ENCODE measurements at regions of chr13 and their contacts with region 1.

Region 1: DNA sequence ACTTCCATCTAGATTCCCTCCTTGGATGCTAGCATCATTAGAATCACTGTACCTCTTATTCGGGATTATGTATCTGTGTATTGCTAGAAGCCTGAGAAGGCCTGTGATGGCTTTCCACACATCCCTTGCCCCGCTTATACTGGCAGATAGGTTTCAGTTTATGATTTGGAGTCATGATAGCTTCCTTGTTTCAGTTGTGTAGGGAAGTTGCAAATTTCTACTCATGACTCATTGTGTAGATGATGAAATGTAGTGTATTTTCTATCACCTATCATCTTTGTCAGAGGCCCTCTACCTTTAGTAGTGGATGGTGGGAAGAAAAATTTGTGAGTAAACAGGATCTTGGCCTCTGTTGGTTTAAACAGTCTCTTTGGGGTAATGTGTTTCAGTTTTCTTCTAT is 165.2 kb downstream of the GGACT start:
- DNase-seq: no peak
- ATAC-seq: no peak
- H3K4me3 ChIP-seq: no peak overlapping the region
- H3K4me3 Mint-ChIP-seq: no peak overlapping the region
- H3K27ac ChIP-seq: no peak overlapping the region
- H3K27ac Mint-ChIP-seq: no peak overlapping the region
- H3K4me1 ChIP-seq: no peaks in the 10 kb centered on the region
- H3K4me1 Mint-ChIP-seq: no peaks in the 10 kb centered on the region
- H3K27me3 ChIP-seq: no peaks in the 10 kb centered on the region
- H3K27me3 Mint-ChIP-seq: no peaks in the 10 kb centered on the region

Region 2: DNA sequence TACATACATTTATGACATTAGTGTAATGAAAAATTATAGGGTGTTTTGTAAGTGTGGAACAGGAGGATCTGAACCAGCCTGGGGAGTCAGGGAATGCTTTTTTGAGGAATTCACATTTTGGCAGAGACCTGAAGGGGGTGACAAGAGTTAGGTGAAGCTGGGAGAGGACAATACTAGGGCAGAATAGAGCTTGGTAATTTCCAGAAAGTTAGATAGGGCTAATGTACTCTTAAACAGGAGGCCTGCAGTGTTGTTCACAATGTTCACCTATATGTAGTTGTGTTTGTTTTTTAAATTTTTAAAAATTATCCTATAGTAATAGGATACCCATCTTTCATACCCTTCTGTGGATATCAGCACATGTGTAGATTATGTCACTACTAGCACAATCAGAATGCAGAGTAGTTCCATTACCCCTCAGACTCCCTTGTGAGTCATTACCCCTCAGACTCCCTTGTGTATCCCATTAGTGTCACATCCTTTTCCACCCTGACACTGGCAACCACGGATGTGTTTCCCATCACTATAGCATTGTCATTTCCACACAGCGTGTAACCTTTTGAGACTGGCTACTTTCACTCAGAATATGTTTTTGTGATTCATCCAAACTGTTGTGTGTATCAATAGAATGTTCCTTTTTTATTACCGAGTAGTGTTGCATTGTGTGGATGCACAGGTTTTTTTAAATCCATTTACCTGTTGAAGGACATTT is 291.4 kb before region 1 on chr13:
- CTCF ChIA-PET with region 1: interaction called in 1 of 2 experiments, 11 read pairs
- POLR2A ChIA-PET with region 1: no interaction called
- DNase-seq: no peak
- ATAC-seq: peak in 2 of 4 experiments; percentile 81 to 85
- H3K4me3 ChIP-seq: no peak overlapping the region
- H3K4me3 Mint-ChIP-seq: no peak overlapping the region
- H3K27ac ChIP-seq: no peak overlapping the region
- H3K27ac Mint-ChIP-seq: no peak overlapping the region
- H3K4me1 ChIP-seq: peaks cover 4 to 6% of the 10 kb centered on the region in 2 experiments
- H3K4me1 Mint-ChIP-seq: peaks cover 11 to 16% (median 15%) of the 10 kb centered on the region in 3 donors
- H3K27me3 ChIP-seq: no peaks in the 10 kb centered on the region
- H3K27me3 Mint-ChIP-seq: no peaks in the 10 kb centered on the region

Region 3: GRCh38 chr13:100156788-100157187 is 266.6 kb before region 1 on chr13:
- CTCF ChIA-PET with region 1: no interaction called
- POLR2A ChIA-PET with region 1: no interaction called
- DNase-seq: no peak
- ATAC-seq: no peak
- H3K4me3 ChIP-seq: no peak overlapping the region
- H3K4me3 Mint-ChIP-seq: no peak overlapping the region
- H3K27ac ChIP-seq: no peak overlapping the region
- H3K27ac Mint-ChIP-seq: no peak overlapping the region
- H3K4me1 ChIP-seq: no peaks in the 10 kb centered on the region
- H3K4me1 Mint-ChIP-seq: peaks cover 0 to 4% (median 2%) of the 10 kb centered on the region in 3 donors
- H3K27me3 ChIP-seq: no peaks in the 10 kb centered on the region
- H3K27me3 Mint-ChIP-seq: no peaks in the 10 kb centered on the region

Measured in T-cell (primary cell).